Activated T-helper 2 cell treated with anti-CD3 and anti-CD28 coated beads, Interferon-gamma antibody, Interleukin-2, Interleukin-4, amounts not matched to agents 10 μg/mL and 5 μg/mL and 100 μg/mL, durations not matched to agents 14 hours and 24 hours and 36 hours (primary cell): ENCODE measurements at regions of chr21 and their contacts with region 1.

Region 1: GRCh38 chr21:44892536-44893277 is 19.2 kb upstream of the PTTG1IP start:
- DNase-seq: peak; percentile 68
- H3K4me3 Mint-ChIP-seq: no peak overlapping the region
- H3K27ac Mint-ChIP-seq: no peak overlapping the region
- H3K4me1 Mint-ChIP-seq: peaks cover 5% of the 10 kb centered on the region
- H3K27me3 Mint-ChIP-seq: no peaks in the 10 kb centered on the region

Region 2: DNA sequence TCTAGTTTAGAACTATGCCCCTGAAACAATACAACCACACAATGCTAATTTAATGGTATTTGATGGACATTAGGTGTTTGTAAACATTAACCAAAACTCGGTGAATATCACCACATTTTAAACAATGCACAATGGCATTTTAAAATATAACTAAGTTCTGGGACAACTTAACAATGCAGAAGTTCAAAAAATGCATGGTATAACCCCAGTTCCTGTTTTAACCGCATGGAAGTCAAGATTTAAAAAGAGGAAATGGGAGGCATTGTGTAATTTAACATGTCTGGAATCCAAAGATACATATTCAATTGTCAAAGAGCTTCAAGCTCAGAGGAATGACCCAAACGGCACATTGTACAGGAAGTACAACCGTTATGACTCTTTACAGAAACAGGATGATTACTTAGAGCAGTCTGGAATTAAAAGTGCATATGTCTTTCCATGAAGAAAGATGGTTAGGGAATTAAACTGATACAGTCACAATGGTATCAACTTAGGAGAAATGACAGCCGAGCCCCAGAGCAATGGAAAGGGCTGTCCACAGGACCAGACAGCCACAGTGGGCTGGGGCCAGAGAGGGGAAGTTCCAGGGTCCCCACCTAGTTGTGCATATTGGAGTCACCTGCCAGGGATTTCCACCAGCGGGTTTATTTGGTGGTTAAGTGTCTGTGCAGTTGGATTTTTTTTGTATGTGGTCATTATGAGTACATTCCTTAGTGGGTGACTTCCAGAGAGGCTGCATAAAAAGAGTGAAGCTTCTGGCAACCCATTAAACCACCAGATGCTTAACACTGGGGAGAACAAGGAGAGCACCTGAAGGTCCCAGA is 11.7 kb before region 1 on chr21:
- intact Hi-C with region 1: no loop called
- DNase-seq: no peak
- H3K4me3 Mint-ChIP-seq: no peak overlapping the region
- H3K27ac Mint-ChIP-seq: peak overlapping the region; percentile 68
- H3K4me1 Mint-ChIP-seq: peaks cover 21% of the 10 kb centered on the region
- H3K27me3 Mint-ChIP-seq: no peaks in the 10 kb centered on the region

Region 3: DNA sequence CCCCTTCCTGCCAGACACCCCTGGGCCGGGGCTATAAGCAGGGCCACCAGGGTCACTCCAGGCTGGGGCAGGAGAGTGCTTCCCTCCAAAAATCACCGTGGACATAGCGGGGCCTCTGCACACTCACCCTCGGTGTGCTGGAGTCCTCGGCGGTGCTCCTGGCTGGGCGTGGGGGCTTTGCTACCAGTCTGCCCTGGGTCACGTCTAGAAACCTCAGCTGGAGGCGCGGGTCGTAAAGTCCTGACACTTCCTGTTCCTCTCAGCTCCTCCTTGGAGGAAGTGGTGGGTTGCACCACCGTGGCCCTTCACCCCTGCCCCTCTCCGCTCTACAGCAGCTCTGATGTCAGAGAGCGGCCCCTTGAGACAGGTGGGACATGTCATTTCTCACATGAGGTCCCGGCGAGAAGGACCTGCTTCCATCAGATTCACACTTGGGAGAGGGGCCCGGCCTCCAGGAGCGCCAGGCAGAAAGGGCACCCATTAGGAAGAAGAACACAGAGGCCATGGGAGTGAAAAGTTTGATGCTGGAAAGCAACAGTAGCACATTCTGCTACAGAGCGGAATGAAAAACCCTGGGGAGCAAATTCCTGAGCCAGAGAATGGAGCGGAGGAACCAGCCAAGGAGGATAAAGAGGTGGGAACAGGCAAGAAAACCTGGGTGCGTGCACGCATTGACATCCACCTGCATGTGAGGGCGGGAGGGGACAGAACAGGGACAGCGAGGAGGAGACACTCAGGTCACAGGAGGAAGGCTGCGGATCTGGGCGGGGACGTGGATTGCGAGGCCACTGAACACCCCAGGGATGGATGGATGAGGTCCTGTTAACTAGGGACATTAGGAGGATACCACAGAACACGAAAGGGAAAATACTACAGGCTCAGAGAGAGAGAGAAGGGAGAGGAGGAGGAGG is 28.2 kb after region 1 on chr21 and contains the start of gene ITGB2:
- intact Hi-C with region 1: loop called (anchors 2 kb)
- DNase-seq: peak; percentile 50
- H3K4me3 Mint-ChIP-seq: peak within 1 kb of the TSS; percentile 97
- H3K27ac Mint-ChIP-seq: peak within 1 kb of the TSS; percentile 90
- H3K4me1 Mint-ChIP-seq: peaks cover 59% of the 10 kb centered on the region
- H3K27me3 Mint-ChIP-seq: no peaks in the 10 kb centered on the region
- total RNA-seq, gene ITGB2: 210 and 212 TPM in 2 replicates

Region 4: DNA sequence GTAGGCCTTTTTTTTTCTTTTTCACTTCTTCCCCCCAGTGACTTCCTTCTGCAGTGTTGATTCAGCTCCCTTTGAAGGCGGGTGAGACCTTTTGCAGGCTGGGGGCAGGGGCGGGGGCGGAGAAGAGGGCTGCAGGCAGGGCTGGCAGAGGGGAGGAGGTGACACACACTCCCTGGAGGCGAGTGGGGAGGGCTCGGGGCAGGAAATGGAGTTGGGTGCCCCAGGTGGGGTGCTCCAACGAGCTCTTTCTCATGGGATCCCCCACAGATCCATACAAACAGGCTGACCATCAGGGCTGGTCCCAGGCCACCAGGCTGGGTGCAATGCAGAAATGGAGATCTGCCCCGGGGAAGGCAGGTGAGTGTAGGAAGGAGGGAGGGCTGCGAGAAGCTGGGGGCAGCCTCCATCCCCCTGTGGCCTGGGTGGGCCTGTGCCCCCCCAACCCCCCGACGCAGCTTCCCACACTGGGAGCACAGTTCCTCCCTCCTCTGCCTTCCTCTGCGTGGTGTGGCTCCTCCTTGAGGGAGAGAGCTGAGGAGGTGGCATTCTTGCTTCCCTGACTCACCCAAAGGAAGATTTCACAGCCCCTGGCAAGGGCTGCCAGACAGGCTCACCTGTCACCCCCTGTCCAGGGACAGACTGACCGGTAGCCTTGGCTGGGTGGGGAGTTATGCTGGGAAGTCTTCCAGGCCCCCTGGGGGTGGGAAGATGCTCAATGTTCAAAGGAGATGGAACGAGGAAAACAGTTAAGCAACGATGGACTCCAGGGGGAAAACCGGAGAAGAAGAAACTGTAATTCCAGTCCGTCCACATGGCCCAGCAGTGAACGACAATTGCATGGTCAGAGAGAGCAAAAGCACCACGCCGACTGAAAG is 35.1 kb after region 1 on chr21:
- intact Hi-C with region 1: loop called (anchors 2 kb)
- DNase-seq: peak; percentile 65
- H3K4me3 Mint-ChIP-seq: peak overlapping the region; percentile 74
- H3K27ac Mint-ChIP-seq: peak overlapping the region; percentile 96
- H3K4me1 Mint-ChIP-seq: peaks cover 70% of the 10 kb centered on the region
- H3K27me3 Mint-ChIP-seq: no peaks in the 10 kb centered on the region